ENCODE measurements at regions of chr3 and their contacts with region 1.

Region 1: DNA sequence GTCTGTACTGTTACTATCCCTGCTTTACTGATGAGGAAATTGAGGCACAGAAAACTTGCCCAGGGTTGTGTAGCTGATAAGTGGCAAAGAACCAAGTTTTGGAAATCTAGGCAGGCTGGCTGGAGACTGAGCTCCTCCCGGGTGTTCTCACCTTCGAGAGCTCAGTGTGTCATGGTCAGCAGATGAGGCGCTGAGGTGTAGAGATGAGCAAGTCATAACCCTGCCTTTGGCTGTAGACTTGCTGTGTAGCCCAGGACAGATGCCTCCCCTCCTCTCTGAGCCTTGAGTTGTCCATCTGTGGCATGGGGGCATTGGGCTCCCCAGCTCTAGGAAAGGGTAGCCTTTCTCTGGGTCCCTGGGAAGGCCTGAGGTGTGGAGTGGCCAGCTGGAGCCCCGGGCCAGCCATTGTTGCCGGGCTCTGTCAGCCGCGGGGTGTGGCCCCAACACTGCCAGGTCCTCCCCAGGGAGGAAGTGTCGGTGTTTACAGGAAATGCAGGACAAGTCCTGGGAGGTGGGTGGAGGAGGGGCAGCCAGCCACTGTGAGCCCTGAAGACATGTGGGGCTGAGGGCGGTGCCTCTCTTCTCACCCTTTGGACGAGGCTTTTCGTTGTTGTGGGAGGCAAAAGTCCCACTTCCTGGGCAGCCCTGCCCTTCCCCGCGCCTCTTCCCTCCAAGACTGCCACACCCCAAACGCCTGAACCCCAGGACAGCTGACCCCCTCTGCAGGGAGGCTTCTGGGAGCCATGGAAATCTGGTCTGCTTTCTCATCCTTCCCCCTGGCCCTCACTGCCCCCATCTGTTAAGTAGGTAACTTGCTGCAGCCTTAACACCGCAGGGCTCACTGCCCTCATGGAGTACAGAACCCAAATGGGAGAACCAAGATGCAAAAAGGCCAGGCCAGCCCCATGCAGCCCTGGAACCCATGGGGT is 29.1 kb downstream of the FGD5 start:
- DNase-seq: peak; percentile 43
- H3K4me3 ChIP-seq: no peak overlapping the region
- H3K27ac ChIP-seq: peak overlapping the region; percentile 10
- H3K4me1 ChIP-seq: peaks cover 23% of the 10 kb centered on the region
- H3K27me3 ChIP-seq: no peaks in the 10 kb centered on the region
- CTCF ChIP-seq: no peak
- POLR2A ChIP-seq: no peak

Region 2: DNA sequence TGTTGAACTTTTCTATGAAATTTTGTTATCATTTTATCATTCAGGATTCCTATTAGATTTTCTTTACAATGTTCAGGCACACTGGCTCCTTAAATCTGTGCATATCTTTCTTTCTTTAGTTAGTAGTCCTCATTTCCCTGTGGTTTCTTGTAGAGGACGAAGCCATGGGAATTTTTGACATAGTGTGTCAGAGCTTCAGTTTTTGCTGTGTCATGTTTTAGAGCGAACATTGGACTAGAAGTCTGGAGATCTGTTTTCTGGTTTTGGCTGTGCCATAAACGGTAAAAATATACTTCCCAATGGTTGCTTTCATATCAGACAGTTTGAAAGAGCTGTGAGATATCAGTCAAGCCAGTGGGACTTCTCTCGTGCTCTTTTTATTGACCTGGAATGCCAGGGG is 828.4 kb before region 1 on chr3:
- CTCF ChIA-PET with region 1: no interaction called
- POLR2A ChIA-PET with region 1: no interaction called
- dilution Hi-C with region 1: no loop called
- intact Hi-C with region 1: no loop called
- DNase-seq: no peak
- H3K4me3 ChIP-seq: no peak overlapping the region
- H3K27ac ChIP-seq: no peak overlapping the region
- H3K4me1 ChIP-seq: no peaks in the 10 kb centered on the region
- H3K27me3 ChIP-seq: no peaks in the 10 kb centered on the region
- CTCF ChIP-seq: no peak
- POLR2A ChIP-seq: no peak

Region 3: GRCh38 chr3:14125191-14126016 is 722.5 kb before region 1 on chr3:
- CTCF ChIA-PET with region 1: no interaction called
- POLR2A ChIA-PET with region 1: no interaction called
- dilution Hi-C with region 1: no loop called
- intact Hi-C with region 1: no loop called
- DNase-seq: peak; percentile 84
- H3K4me3 ChIP-seq: peak overlapping the region; percentile 17 to 90 (median 66)
- H3K27ac ChIP-seq: peak overlapping the region; percentile 61
- H3K4me1 ChIP-seq: peaks cover 22% of the 10 kb centered on the region
- H3K27me3 ChIP-seq: no peaks in the 10 kb centered on the region
- CTCF ChIP-seq: peak in 1 of 2 donors; percentile 2
- POLR2A ChIP-seq: no peak

Region 4: GRCh38 chr3:14672588-14672987 is 175.3 kb before region 1 on chr3:
- CTCF ChIA-PET with region 1: interaction called, 3 read pairs
- POLR2A ChIA-PET with region 1: no interaction called
- dilution Hi-C with region 1: no loop called
- intact Hi-C with region 1: loop called (anchors 5 kb)
- DNase-seq: no peak
- H3K4me3 ChIP-seq: no peak overlapping the region
- H3K27ac ChIP-seq: no peak overlapping the region
- H3K4me1 ChIP-seq: no peaks in the 10 kb centered on the region
- H3K27me3 ChIP-seq: no peaks in the 10 kb centered on the region
- CTCF ChIP-seq: no peak
- POLR2A ChIP-seq: no peak

Measured in endothelial cell of umbilical vein (primary cell).